ENCODE measurements at regions of chr14 and their contacts with region 1.

Region 1: GRCh38 chr14:24259252-24259995 is 3.6 kb downstream of the TGM1 start:
- DNase-seq: no peak
- ATAC-seq: no peak
- H3K4me3 ChIP-seq: no peak overlapping the region
- H3K27ac ChIP-seq: no peak overlapping the region
- H3K4me1 ChIP-seq: no peaks in the 10 kb centered on the region
- H3K27me3 ChIP-seq: no peaks in the 10 kb centered on the region
- CTCF ChIP-seq: no peak

Region 2: DNA sequence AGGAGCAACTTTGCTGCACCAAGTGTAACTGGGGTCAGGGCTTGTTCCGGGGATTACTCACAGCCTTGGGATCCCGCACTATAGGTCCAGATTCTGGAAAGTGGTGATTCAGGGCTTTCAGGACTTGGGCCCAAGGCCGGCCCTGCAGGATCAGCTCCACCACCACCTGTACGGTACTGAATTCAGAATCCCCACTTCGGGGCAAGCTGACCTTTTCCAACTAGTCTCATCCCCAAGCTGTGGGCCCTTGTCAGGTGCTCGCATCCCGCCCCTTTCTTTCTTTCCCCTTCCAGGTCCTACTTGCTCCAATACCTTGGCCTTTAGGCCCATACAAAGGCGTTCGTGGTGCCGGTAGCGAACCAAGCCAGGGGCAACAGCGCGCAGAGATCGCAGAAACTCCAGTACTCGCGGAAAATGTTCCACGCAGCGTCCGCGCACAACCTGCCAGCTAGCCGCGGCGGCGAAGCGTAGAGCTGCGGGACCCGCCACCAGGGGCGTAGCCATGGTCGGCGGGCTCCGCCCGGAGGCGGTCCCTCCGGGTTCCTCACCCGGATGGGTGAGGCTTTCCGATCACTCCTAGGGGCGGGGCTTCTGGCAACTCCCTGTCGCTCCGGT is 17.5 kb before region 1 on chr14:
- CTCF ChIA-PET with region 1: no interaction called
- POLR2A ChIA-PET with region 1: interaction called, 12 read pairs
- in situ Hi-C with region 1: no loop called
- intact Hi-C with region 1: no loop called
- DNase-seq: peak; percentile 72
- ATAC-seq: peak; percentile 93
- H3K4me3 ChIP-seq: peak overlapping the region; percentile 77 to 91
- H3K27ac ChIP-seq: peak overlapping the region; percentile 93
- H3K4me1 ChIP-seq: peaks cover 12% of the 10 kb centered on the region
- H3K27me3 ChIP-seq: no peaks in the 10 kb centered on the region
- CTCF ChIP-seq: no peak